CD4-positive, alpha-beta T cell (primary cell): ENCODE measurements at regions of chr10 and their contacts with region 1.

Region 1: DNA sequence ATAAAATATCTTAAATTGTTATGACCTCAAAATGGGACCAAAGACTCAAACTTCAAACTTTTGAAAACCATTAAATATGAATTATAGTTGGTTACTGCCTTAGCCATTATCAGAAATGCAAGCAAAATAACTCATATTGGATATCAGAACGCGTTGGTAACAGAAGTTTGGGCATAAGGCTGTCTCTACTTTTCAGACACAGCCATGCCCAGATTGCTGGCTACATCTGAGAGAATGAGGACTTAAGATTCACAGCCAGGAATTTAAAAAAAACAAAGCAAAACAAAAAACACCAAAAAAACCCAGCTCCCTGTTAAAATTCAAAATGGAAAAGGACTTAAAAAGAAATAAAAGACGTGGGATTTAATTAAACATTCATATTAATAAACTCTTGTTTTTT is 161.6 kb downstream of the JMJD1C start:
- DNase-seq: no peak
- ATAC-seq: no peak
- H3K4me3 ChIP-seq: no peak overlapping the region
- H3K4me3 Mint-ChIP-seq: no peak overlapping the region
- H3K27ac ChIP-seq: no peak overlapping the region
- H3K27ac Mint-ChIP-seq: no peak overlapping the region
- H3K4me1 ChIP-seq: no peaks in the 10 kb centered on the region
- H3K4me1 Mint-ChIP-seq: peaks cover 29% of the 10 kb centered on the region
- H3K27me3 ChIP-seq: no peaks in the 10 kb centered on the region
- H3K27me3 Mint-ChIP-seq: no peaks in the 10 kb centered on the region
- CTCF ChIP-seq: no peak

Region 2: GRCh38 chr10:63337455-63338251 is 33.5 kb after region 1 on chr10:
- CTCF ChIA-PET with region 1: no interaction called
- POLR2A ChIA-PET with region 1: no interaction called
- intact Hi-C with region 1: loop called in 1 of 2 experiments (anchors 2 kb)
- DNase-seq: no peak
- ATAC-seq: no peak
- H3K4me3 ChIP-seq: no peak overlapping the region
- H3K4me3 Mint-ChIP-seq: no peak overlapping the region
- H3K27ac ChIP-seq: no peak overlapping the region
- H3K27ac Mint-ChIP-seq: no peak overlapping the region
- H3K4me1 ChIP-seq: no peaks in the 10 kb centered on the region
- H3K4me1 Mint-ChIP-seq: peaks cover 13% of the 10 kb centered on the region
- H3K27me3 ChIP-seq: no peaks in the 10 kb centered on the region
- H3K27me3 Mint-ChIP-seq: no peaks in the 10 kb centered on the region
- CTCF ChIP-seq: no peak

Region 3: GRCh38 chr10:63388421-63389031 is 84.4 kb after region 1 on chr10:
- CTCF ChIA-PET with region 1: no interaction called
- POLR2A ChIA-PET with region 1: no interaction called
- intact Hi-C with region 1: no loop called
- DNase-seq: peak in 3 of 14 experiments; percentile 36 to 71 (median 42)
- ATAC-seq: peak; percentile 69
- H3K4me3 ChIP-seq: peak overlapping the region; percentile 17
- H3K4me3 Mint-ChIP-seq: peak overlapping the region; percentile 72
- H3K27ac ChIP-seq: no peak overlapping the region
- H3K27ac Mint-ChIP-seq: peak overlapping the region; percentile 50
- H3K4me1 ChIP-seq: peaks cover 19% of the 10 kb centered on the region
- H3K4me1 Mint-ChIP-seq: peaks cover 73% of the 10 kb centered on the region
- H3K27me3 ChIP-seq: no peaks in the 10 kb centered on the region
- H3K27me3 Mint-ChIP-seq: no peaks in the 10 kb centered on the region
- CTCF ChIP-seq: no peak